Psoas muscle (tissue), 8 donors: ENCODE measurements at regions of chr11 and their contacts with region 1.

Region 1: GRCh38 chr11:47649276-47649675 is 6.9 kb upstream of the MTCH2 start:
- DNase-seq: no peak
- ATAC-seq: no peak
- H3K4me3 ChIP-seq: no peak overlapping the region
- H3K27ac ChIP-seq: no peak overlapping the region
- H3K4me1 ChIP-seq: no peaks in the 10 kb centered on the region
- H3K27me3 ChIP-seq: no peaks in the 10 kb centered on the region
- CTCF ChIP-seq: no peak

Region 2: GRCh38 chr11:47714554-47715081 is 65.3 kb after region 1 on chr11:
- intact Hi-C with region 1: loop called in 1 of 2 experiments (anchors 5 kb)
- DNase-seq: peak in 1 of 2 donors; percentile 26
- ATAC-seq: peak; percentile 23 to 59 (median 36)
- H3K4me3 ChIP-seq: peak overlapping the region; percentile 78
- H3K27ac ChIP-seq: peak overlapping the region; percentile 19
- H3K4me1 ChIP-seq: peaks cover 4% of the 10 kb centered on the region
- H3K27me3 ChIP-seq: no peaks in the 10 kb centered on the region
- CTCF ChIP-seq: no peak

Region 3: DNA sequence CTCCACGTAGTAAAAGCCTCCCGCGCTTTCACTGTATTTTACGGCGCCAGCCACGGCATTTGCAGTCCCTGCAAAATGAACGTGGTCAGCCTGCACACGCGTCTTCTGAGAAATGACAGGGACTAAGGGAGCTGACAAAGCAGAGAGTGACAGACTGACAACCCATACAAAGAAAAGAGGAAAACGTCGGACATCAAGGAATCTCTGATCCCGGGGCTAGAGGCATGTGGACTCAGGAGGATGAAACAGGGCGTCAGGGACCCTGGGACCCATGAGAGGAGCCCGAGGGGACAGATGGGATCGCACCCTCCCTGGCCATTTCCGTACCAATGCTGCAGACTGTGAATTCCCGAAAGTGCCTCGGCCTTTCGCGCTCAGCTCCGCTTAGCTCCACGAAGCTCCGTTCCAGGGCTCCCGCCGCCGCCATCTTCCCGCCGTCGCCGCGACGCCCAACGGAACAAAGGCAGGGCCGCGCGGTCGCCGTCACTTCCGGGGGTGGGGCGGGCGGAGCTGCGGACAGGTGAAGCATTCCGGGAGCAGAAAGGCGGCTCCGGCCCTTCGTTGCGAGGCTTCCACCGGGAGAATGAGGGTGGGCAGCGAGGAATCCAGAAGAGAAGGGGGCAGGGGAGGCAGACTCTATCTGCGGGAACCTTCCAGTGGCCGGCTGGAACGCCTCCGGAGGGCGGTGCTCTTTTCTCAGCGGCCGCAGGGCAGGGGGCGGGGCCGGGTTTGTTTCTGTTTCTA is 198.8 kb after region 1 on chr11 and contains the start of gene NUP160:
- intact Hi-C with region 1: loop called (anchors 5 kb)
- DNase-seq: peak; percentile 86 to 92
- ATAC-seq: peak; percentile 91 to 96 (median 92)
- H3K4me3 ChIP-seq: peak within 1 kb of the TSS; percentile 82
- H3K27ac ChIP-seq: peak within 1 kb of the TSS; percentile 93
- H3K4me1 ChIP-seq: peaks cover 40% of the 10 kb centered on the region
- H3K27me3 ChIP-seq: no peaks in the 10 kb centered on the region
- CTCF ChIP-seq: no peak
- total RNA-seq, gene NUP160: 9.0 to 14.0 (median 12.1) TPM

Region 4: GRCh38 chr11:48270621-48271020 is 621.3 kb after region 1 on chr11:
- intact Hi-C with region 1: no loop called
- DNase-seq: no peak
- ATAC-seq: no peak
- H3K4me3 ChIP-seq: no peak overlapping the region
- H3K27ac ChIP-seq: no peak overlapping the region
- H3K4me1 ChIP-seq: no peaks in the 10 kb centered on the region
- H3K27me3 ChIP-seq: no peaks in the 10 kb centered on the region
- CTCF ChIP-seq: no peak